Ascending aorta (tissue), 2 donors: ENCODE measurements at regions of chr9 and their contacts with region 1.

Region 1: DNA sequence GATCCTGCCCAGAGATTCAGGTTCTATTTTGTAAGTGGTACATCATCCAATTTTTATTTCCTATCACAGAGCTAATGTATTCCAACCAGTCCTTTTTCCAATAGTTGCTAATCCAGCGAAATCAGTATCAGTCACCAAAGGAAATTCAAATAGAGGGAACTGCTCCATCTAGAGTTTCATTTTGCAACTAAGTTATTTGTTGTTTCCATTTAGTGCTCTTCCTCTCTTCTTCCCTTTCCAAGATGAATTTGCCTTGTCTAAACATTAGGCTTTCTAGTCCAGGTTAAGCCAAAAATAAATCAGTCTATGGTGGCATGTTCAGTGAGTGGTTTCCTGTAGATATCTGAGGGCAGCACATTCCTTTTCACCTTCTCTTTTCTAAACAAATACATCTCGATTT is 79.8 kb upstream of the SPATA31D4 start:
- DNase-seq: no peak
- H3K4me3 ChIP-seq: no peak overlapping the region
- H3K27ac ChIP-seq: no peak overlapping the region
- H3K4me1 ChIP-seq: no peaks in the 10 kb centered on the region
- H3K27me3 ChIP-seq: no peaks in the 10 kb centered on the region
- CTCF ChIP-seq: peak in 2 of 3 experiments; percentile 33 to 66

Region 2: GRCh38 chr9:81529556-81530195 is 318.8 kb before region 1 on chr9:
- intact Hi-C with region 1: loop called (anchors 10 kb)
- DNase-seq: peak; percentile 16 to 75
- H3K4me3 ChIP-seq: no peak overlapping the region
- H3K27ac ChIP-seq: peak overlapping the region; percentile 31 to 47
- H3K4me1 ChIP-seq: peaks cover 3% of the 10 kb centered on the region in 2 donors
- H3K27me3 ChIP-seq: no peaks in the 10 kb centered on the region
- CTCF ChIP-seq: no peak

Region 3: GRCh38 chr9:81609782-81610739 is 238.4 kb before region 1 on chr9:
- intact Hi-C with region 1: loop called (anchors 5 kb)
- DNase-seq: no peak
- H3K4me3 ChIP-seq: no peak overlapping the region
- H3K27ac ChIP-seq: peak overlapping the region; percentile 50 to 91
- H3K4me1 ChIP-seq: peaks cover 3 to 15% of the 10 kb centered on the region in 2 donors
- H3K27me3 ChIP-seq: no peaks in the 10 kb centered on the region
- CTCF ChIP-seq: no peak

Region 4: DNA sequence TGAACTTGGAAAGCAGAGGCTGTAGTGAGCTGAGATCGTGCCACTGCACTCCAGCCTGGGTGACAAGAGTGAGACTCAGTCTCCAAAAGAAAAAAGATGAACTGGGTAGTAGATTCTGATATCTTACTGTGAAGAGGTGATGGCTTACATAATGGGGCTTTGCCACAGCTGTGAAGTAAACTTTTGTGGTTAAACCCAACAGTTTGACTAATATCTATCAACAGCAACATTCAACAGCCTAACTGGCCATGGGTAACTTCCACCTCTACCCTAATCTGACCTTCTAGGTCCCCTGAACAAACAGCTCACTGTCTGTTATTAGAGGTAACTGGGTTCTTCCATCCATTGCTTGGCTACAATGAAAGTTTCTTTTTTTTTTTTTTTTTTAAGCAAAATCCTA is 211.2 kb before region 1 on chr9:
- intact Hi-C with region 1: no loop called
- DNase-seq: no peak
- H3K4me3 ChIP-seq: no peak overlapping the region
- H3K27ac ChIP-seq: no peak overlapping the region
- H3K4me1 ChIP-seq: peaks cover 0 to 3% of the 10 kb centered on the region in 2 donors
- H3K27me3 ChIP-seq: no peaks in the 10 kb centered on the region
- CTCF ChIP-seq: no peak

Region 5: GRCh38 chr9:81759668-81760215 is 88.7 kb before region 1 on chr9:
- intact Hi-C with region 1: loop called (anchors 5 kb)
- DNase-seq: peak; percentile 53 to 82
- H3K4me3 ChIP-seq: no peak overlapping the region
- H3K27ac ChIP-seq: peak overlapping the region; percentile 25 to 58
- H3K4me1 ChIP-seq: peaks cover 0 to 8% of the 10 kb centered on the region in 2 donors
- H3K27me3 ChIP-seq: no peaks in the 10 kb centered on the region
- CTCF ChIP-seq: no peak